Activated naive CD4-positive, alpha-beta T cell treated with anti-CD3 and anti-CD28 coated beads for 36 hours (primary cell): ENCODE measurements at regions of chr5 and their contacts with region 1.

Region 1: GRCh38 chr5:56270568-56271392 is 37.6 kb upstream of the ANKRD55 start:
- DNase-seq: peak; percentile 88
- H3K4me3 Mint-ChIP-seq: peak overlapping the region; percentile 17
- H3K27ac Mint-ChIP-seq: peak overlapping the region; percentile 61
- H3K4me1 Mint-ChIP-seq: peaks cover 17% of the 10 kb centered on the region
- H3K27me3 Mint-ChIP-seq: no peaks in the 10 kb centered on the region

Region 2: GRCh38 chr5:56288873-56289601 is 18.3 kb after region 1 on chr5:
- CTCF ChIA-PET with region 1: interaction called, 11 read pairs
- intact Hi-C with region 1: no loop called
- DNase-seq: no peak
- H3K4me3 Mint-ChIP-seq: no peak overlapping the region
- H3K27ac Mint-ChIP-seq: no peak overlapping the region
- H3K4me1 Mint-ChIP-seq: peaks cover 6% of the 10 kb centered on the region
- H3K27me3 Mint-ChIP-seq: no peaks in the 10 kb centered on the region

Region 3: GRCh38 chr5:56475689-56476486 is 205.1 kb after region 1 on chr5:
- CTCF ChIA-PET with region 1: interaction called, 18 read pairs
- intact Hi-C with region 1: loop called (anchors 2 kb)
- DNase-seq: no peak
- H3K4me3 Mint-ChIP-seq: no peak overlapping the region
- H3K27ac Mint-ChIP-seq: no peak overlapping the region
- H3K4me1 Mint-ChIP-seq: peaks cover 27% of the 10 kb centered on the region
- H3K27me3 Mint-ChIP-seq: no peaks in the 10 kb centered on the region

Region 4: GRCh38 chr5:56686337-56687195 is 415.8 kb after region 1 on chr5:
- CTCF ChIA-PET with region 1: interaction called, 3 read pairs
- intact Hi-C with region 1: loop called (anchors 5 kb)
- DNase-seq: no peak
- H3K4me3 Mint-ChIP-seq: no peak overlapping the region
- H3K27ac Mint-ChIP-seq: no peak overlapping the region
- H3K4me1 Mint-ChIP-seq: peaks cover 61% of the 10 kb centered on the region
- H3K27me3 Mint-ChIP-seq: no peaks in the 10 kb centered on the region

Region 5: DNA sequence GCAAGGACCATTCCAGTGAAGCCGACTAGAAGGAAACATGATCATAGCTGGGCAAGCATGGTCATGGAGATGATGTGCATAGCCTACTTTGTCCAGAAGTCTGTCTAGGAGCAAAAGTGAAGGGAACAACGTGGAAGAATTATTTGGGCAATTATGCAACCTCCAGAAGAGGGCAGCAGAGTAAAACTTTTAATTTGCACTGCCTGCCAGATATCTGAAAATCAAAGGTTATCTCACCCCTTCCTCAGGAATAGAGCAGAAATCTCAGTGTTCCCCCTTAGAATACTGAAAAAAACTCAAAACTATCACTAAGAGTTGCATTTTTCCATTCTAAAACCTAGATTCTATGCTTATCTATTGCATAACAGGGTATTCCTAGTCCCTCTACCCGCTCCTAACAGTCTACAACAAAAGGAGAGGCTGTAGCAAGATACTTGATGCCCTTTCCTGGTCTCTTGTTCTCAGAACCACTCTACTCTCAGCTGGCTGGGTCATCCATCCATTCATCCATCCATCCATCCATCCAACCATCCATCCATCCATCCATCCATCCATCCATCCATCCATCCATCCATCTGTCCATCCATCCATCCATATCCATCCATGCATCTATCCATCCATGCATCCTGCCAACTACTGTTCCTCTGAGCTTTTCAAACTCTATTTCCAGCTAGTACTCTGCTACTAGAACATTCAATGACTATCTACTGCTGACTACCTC is 630.2 kb after region 1 on chr5:
- CTCF ChIA-PET with region 1: interaction called, 3 read pairs
- intact Hi-C with region 1: loop called (anchors 1 kb)
- DNase-seq: peak; percentile 46
- H3K4me3 Mint-ChIP-seq: no peak overlapping the region
- H3K27ac Mint-ChIP-seq: no peak overlapping the region
- H3K4me1 Mint-ChIP-seq: peaks cover 2% of the 10 kb centered on the region
- H3K27me3 Mint-ChIP-seq: no peaks in the 10 kb centered on the region

Region 6: GRCh38 chr5:57221049-57221568 is 950.3 kb after region 1 on chr5:
- CTCF ChIA-PET with region 1: no interaction called
- intact Hi-C with region 1: loop called (anchors 2 kb)
- DNase-seq: no peak
- H3K4me3 Mint-ChIP-seq: no peak overlapping the region
- H3K27ac Mint-ChIP-seq: peak overlapping the region; percentile 68
- H3K4me1 Mint-ChIP-seq: peaks cover 48% of the 10 kb centered on the region
- H3K27me3 Mint-ChIP-seq: no peaks in the 10 kb centered on the region